Transverse colon (tissue), 4 donors: ENCODE measurements at regions of chr2 and their contacts with region 1.

Region 1: GRCh38 chr2:11124503-11125068 is 30.7 kb upstream of the SLC66A3 start:
- DNase-seq: peak; percentile 81
- H3K4me3 ChIP-seq: no peak overlapping the region
- H3K27ac ChIP-seq: no peak overlapping the region
- H3K4me1 ChIP-seq: peaks cover 0 to 5% (median under 1%) of the 10 kb centered on the region in 4 donors
- H3K27me3 ChIP-seq: no peaks in the 10 kb centered on the region
- CTCF ChIP-seq: peak; percentile 69 to 83 (median 79)
- EP300 ChIP-seq: no peak
- POLR2A ChIP-seq: no peak

Region 2: GRCh38 chr2:10832203-10832936 is 292.2 kb before region 1 on chr2:
- in situ Hi-C with region 1: loop called (anchors 5 kb)
- intact Hi-C with region 1: loop called (anchors 2 kb)
- DNase-seq: peak; percentile 83
- H3K4me3 ChIP-seq: no peak overlapping the region
- H3K27ac ChIP-seq: no peak overlapping the region
- H3K4me1 ChIP-seq: peaks cover 0 to 15% (median 7%) of the 10 kb centered on the region in 4 donors
- H3K27me3 ChIP-seq: peaks cover 10% of the 10 kb centered on the region
- CTCF ChIP-seq: peak; percentile 93 to 98 (median 96)
- EP300 ChIP-seq: no peak
- POLR2A ChIP-seq: no peak

Region 3: GRCh38 chr2:11411768-11412448 is 287.3 kb after region 1 on chr2:
- in situ Hi-C with region 1: loop called in 1 of 4 experiments (anchors 25 kb)
- intact Hi-C with region 1: no loop called
- DNase-seq: peak; percentile 66
- H3K4me3 ChIP-seq: peak overlapping the region in 3 of 4 donors; percentile 23 to 52 (median 29)
- H3K27ac ChIP-seq: peak overlapping the region in 3 of 4 donors; percentile 4 to 58 (median 49)
- H3K4me1 ChIP-seq: peaks cover 0 to 33% (median 18%) of the 10 kb centered on the region in 4 donors
- H3K27me3 ChIP-seq: no peaks in the 10 kb centered on the region
- CTCF ChIP-seq: peak; percentile 74 to 93 (median 84)
- EP300 ChIP-seq: no peak
- POLR2A ChIP-seq: no peak

Region 4: DNA sequence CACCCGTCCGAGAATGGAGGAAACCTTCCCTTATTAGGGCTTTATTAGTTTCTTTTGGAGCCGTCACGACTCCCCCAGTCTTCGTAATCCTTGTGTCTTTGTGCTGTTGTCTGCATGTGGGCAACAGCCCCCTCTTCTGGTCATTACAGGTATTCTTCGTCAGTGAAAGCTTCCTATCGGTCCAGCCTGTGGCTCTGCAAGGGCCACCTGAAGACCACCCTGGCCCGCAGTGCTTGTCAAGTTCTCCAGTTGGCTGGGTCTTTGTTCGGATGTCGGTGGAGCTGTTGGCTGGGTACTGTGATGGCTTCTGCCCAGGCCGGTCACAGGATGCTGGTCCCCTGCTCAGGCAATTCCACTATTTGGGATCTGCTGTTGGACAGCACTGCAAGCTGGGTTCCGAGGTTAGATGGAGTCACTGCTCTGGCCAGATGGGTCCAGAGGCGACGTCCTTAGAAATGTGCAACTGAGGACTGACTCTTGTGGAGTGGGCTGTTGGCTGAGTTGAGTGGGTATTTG is 322.2 kb after region 1 on chr2:
- in situ Hi-C with region 1: loop called in 3 of 4 experiments (anchors 5 to 25 kb)
- intact Hi-C with region 1: loop called (anchors 10 kb)
- DNase-seq: peak; percentile 48
- H3K4me3 ChIP-seq: no peak overlapping the region
- H3K27ac ChIP-seq: no peak overlapping the region
- H3K4me1 ChIP-seq: no peaks in the 10 kb centered on the region
- H3K27me3 ChIP-seq: no peaks in the 10 kb centered on the region
- CTCF ChIP-seq: peak; percentile 76 to 84 (median 80)
- EP300 ChIP-seq: no peak
- POLR2A ChIP-seq: no peak

Region 5: DNA sequence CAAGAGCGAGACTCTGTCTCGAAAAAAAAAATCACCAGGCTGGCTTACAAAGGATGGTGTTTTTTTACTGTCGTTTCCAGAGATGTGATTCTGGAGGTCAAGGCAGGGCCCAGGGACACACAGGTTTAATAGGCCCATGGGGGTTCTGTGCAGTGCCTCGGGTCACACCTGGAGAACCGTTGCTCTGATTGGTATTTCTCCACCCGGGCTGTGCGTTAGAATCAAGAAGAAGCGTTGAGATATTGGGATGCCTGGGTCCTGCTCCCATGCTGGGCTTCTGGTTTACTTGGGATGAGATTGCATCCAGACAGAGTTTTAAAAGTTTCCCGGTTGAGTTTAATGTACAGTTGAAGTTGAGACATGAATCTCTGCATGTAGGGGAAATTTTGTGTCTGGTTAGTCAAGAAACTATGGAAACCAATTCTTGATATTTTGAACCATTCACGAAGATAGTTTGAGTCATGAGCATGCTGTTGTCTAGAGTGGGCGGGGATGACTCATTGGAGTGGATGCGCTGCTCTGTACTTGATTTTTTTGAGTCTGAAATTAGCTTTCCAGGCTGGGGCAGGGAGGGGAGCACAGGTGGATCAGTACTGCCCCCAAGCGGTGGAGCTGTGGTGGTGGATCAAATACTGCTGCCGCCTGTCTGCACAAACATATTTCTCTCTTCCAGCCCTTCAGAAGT is 459.4 kb after region 1 on chr2:
- in situ Hi-C with region 1: loop called in 3 of 4 experiments (anchors 25 kb)
- intact Hi-C with region 1: no loop called
- DNase-seq: peak; percentile 66
- H3K4me3 ChIP-seq: no peak overlapping the region
- H3K27ac ChIP-seq: peak overlapping the region; percentile 15 to 53 (median 33)
- H3K4me1 ChIP-seq: peaks cover 0 to 10% (median 3%) of the 10 kb centered on the region in 4 donors
- H3K27me3 ChIP-seq: no peaks in the 10 kb centered on the region
- CTCF ChIP-seq: peak; percentile 69 to 76 (median 72)
- EP300 ChIP-seq: no peak
- POLR2A ChIP-seq: no peak